ENCODE measurements at regions of chr15 and their contacts with region 1.

Region 1: DNA sequence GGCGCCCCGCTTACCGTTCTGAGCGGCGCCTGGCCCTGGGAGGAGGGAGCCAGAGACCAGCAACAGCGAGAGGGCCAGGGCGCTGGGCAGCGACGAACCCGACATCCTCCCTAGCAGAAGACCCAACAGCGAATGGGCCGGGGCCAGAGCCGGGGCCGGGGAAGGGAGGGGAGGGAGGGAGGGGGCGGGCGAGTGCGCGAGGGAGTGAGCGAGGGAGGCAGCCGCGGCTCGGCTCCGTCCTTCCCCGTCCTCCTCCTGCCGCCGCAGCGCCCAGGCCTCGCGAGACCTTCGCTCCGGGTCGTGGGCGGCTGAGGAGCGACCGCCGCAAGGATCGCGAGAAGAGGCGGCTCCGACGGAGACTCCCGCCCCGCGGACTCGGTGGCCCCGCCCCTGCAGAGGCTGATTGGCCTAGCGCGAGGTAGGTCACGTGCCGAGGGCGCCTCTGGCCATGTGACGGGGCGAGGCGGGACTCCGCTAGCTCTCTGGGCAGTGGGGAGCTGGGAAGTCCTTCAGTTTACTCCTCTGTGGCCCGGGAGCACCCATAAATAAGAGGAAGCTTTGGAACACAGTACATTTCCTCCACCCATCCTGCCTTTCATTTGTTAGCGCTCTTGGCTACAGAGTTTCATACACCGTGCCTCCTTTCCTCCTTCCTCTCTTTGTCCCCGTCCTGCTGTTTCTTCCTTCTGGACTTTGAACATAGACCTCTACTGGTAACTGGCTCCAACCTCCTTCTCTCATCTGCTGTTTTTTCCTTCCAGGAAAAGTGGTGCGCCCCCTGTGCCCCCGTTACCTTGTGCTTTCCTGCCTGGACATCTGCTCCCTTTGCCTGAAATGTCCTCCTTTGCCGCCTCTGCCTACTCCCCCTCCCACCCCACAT is at the start of gene NPTN:
- DNase-seq: peak; percentile 99
- ATAC-seq: peak; percentile 92
- H3K4me3 Mint-ChIP-seq: peak within 1 kb of the TSS; percentile 76
- H3K27ac Mint-ChIP-seq: peak within 1 kb of the TSS; percentile 97
- H3K4me1 Mint-ChIP-seq: peaks cover 57% of the 10 kb centered on the region
- H3K27me3 Mint-ChIP-seq: peaks cover 4% of the 10 kb centered on the region
- CTCF ChIP-seq: no peak
- total RNA-seq, gene NPTN: 96.1 to 116 TPM (median 102 TPM) in 3 replicates

Region 2: DNA sequence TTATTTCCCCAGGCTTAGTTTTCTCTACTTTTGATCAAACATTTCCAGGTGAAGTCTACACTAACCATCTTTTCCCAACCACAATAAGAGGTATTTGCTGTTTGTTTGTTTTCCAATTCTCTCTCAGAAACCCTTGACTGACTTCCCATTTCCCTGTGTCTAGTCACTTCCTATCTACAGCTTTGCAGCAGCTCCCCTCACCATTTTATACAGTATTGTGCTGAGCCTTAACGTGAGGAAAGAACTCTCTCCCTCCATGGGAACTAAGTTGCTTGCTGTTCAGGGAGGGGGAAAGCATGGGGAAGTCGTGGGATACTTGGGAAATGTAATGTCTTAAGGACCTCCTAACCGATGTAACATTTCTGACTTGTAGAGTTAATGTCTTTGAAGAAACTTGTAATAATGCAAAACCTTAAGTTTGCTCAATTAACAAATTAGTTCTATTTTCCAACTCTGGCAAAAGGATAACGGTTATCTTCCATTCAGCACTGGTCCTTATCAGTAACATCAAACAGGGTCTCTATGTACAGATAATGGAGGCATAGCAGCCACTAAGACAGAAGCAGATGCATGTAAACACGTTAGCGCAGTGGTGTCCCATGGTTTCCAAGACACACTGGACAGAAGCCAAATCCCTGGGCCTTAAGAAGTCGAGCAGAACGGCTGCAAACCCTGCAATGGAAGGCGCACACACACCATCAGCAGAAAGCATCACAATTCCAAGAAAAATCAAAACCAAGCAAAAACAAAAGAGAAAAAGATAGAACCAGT is 39.9 kb before region 1 on chr15:
- CTCF ChIA-PET with region 1: interaction called, 25 read pairs
- POLR2A ChIA-PET with region 1: no interaction called
- DNase-seq: no peak
- ATAC-seq: no peak
- H3K4me3 Mint-ChIP-seq: no peak overlapping the region
- H3K27ac Mint-ChIP-seq: peak overlapping the region; percentile 32; the same call in 1 of the 2 replicates
- H3K4me1 Mint-ChIP-seq: peaks cover 50% of the 10 kb centered on the region
- H3K27me3 Mint-ChIP-seq: no peaks in the 10 kb centered on the region
- CTCF ChIP-seq: no peak

Region 3: GRCh38 chr15:73617301-73617831 is 16.0 kb before region 1 on chr15:
- CTCF ChIA-PET with region 1: interaction called, 29 read pairs
- POLR2A ChIA-PET with region 1: interaction called, 5 read pairs
- DNase-seq: no peak
- ATAC-seq: peak; percentile 73
- H3K4me3 Mint-ChIP-seq: peak overlapping the region; percentile 14; the same call in 1 of the 2 replicates
- H3K27ac Mint-ChIP-seq: peak overlapping the region; percentile 90
- H3K4me1 Mint-ChIP-seq: peaks cover 63% of the 10 kb centered on the region
- H3K27me3 Mint-ChIP-seq: no peaks in the 10 kb centered on the region
- CTCF ChIP-seq: no peak

Region 4: DNA sequence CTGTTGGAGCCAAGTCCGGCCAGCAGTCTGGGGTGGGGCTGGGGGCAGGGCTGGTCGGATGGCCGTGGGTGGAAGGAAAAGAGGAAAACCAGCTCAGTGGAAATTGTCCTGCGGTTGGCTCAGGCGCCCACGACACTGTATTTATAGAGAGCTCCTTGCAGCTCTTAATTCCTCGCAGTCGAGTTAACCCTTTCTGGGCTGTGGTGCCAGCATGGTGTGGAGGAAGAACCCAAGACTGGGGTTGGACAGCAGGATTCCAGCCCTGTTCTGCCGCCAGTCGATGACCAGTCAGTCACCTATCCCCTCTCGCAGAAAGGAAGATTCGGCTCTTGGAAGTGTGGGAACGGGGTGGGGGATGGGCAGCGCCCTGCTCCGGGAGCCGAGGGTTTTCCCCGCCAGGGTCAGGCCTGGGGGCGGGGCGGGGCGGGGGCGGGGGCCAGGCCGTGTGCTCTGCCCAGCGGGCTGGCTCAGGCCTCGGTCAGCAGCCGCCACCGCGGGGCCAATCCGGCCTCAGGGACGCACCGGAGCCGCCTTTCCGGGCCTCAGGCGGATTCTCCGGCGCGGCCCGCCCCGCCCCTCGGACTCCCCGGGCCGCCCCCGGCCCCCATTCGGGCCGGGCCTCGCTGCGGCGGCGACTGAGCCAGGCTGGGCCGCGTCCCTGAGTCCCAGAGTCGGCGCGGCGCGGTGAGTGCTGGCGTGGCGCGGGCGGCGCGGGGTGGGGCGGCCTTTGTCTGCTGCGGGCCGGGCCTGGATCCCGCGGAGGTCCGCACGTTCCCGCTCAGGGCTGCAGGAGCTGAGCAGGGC is 50.6 kb after region 1 on chr15 and contains the start of gene CD276:
- CTCF ChIA-PET with region 1: interaction called, 63 read pairs
- POLR2A ChIA-PET with region 1: interaction called, 5 read pairs
- DNase-seq: peak; percentile 80
- ATAC-seq: peak; percentile 72
- H3K4me3 Mint-ChIP-seq: peak within 1 kb of the TSS; percentile 81
- H3K27ac Mint-ChIP-seq: peak within 1 kb of the TSS; percentile 85
- H3K4me1 Mint-ChIP-seq: peaks cover 35% of the 10 kb centered on the region
- H3K27me3 Mint-ChIP-seq: no peaks in the 10 kb centered on the region
- CTCF ChIP-seq: no peak
- total RNA-seq, gene CD276: 146 to 153 TPM (median 150 TPM) in 3 replicates

Region 5: GRCh38 chr15:73704869-73705645 is 71.7 kb after region 1 on chr15:
- CTCF ChIA-PET with region 1: interaction called, 142 read pairs
- POLR2A ChIA-PET with region 1: no interaction called
- DNase-seq: peak; percentile 84
- ATAC-seq: peak; percentile 71
- H3K4me3 Mint-ChIP-seq: no peak overlapping the region
- H3K27ac Mint-ChIP-seq: no peak overlapping the region
- H3K4me1 Mint-ChIP-seq: peaks cover 9% of the 10 kb centered on the region
- H3K27me3 Mint-ChIP-seq: no peaks in the 10 kb centered on the region
- CTCF ChIP-seq: peak; percentile 83

Region 6: GRCh38 chr15:73927476-73928240 is 294.3 kb after region 1 on chr15:
- CTCF ChIA-PET with region 1: interaction called, 10 read pairs
- POLR2A ChIA-PET with region 1: no interaction called
- DNase-seq: peak; percentile 74
- ATAC-seq: peak; percentile 38
- H3K4me3 Mint-ChIP-seq: peak overlapping the region; percentile 68
- H3K27ac Mint-ChIP-seq: no peak overlapping the region
- H3K4me1 Mint-ChIP-seq: peaks cover 43% of the 10 kb centered on the region
- H3K27me3 Mint-ChIP-seq: peaks cover 11% of the 10 kb centered on the region
- CTCF ChIP-seq: peak; percentile 33; the same call in 1 of the 2 replicates

Measured in WTC11 (cell line).